ENCODE measurements at regions of chr13 and their contacts with region 1.

Region 1: DNA sequence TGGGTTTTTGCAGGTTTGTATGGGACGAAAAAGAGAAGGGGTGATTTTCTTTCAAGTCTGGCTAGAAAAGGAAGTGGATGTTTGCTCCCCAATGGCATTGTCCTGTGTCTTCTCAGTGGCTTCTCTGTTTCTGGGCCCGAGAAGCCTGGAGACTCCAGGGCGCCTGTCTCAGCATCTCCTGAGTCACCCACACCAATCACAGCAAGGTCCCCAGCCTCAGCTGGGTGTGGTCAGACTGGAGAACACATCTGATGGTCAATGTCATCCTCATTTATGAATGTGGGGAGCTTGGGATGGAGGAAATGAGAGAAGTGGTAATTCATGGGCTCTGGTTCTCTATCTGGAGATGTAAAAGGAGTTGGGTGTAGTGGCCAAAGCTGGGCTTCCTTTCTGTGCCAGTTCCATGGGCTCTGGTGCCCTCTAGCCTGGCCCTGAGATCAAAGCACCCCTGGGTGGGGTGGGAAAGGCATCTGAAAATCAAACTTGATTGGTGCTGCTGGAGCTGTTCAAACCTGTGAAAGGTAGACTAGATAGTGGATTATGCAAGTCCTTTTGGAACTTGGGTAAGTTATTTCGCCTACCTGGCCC is 13.4 kb downstream of the RASL11A start:
- DNase-seq: peak; percentile 59
- ATAC-seq: peak; percentile 83
- H3K4me3 ChIP-seq: no peak overlapping the region
- H3K27ac ChIP-seq: no peak overlapping the region
- H3K4me1 ChIP-seq: peaks cover 17% of the 10 kb centered on the region
- H3K27me3 ChIP-seq: no peaks in the 10 kb centered on the region
- CTCF ChIP-seq: peak; percentile 66

Region 2: GRCh38 chr13:26946684-26947343 is 337.2 kb before region 1 on chr13:
- CTCF ChIA-PET with region 1: interaction called, 8 read pairs
- POLR2A ChIA-PET with region 1: no interaction called
- intact Hi-C with region 1: loop called (anchors 2 kb)
- DNase-seq: peak; percentile 70
- ATAC-seq: peak; percentile 96
- H3K4me3 ChIP-seq: no peak overlapping the region
- H3K27ac ChIP-seq: no peak overlapping the region
- H3K4me1 ChIP-seq: peaks cover 4% of the 10 kb centered on the region; the same call in 1 of the 2 replicates
- H3K27me3 ChIP-seq: no peaks in the 10 kb centered on the region
- CTCF ChIP-seq: peak; percentile 81

Region 3: DNA sequence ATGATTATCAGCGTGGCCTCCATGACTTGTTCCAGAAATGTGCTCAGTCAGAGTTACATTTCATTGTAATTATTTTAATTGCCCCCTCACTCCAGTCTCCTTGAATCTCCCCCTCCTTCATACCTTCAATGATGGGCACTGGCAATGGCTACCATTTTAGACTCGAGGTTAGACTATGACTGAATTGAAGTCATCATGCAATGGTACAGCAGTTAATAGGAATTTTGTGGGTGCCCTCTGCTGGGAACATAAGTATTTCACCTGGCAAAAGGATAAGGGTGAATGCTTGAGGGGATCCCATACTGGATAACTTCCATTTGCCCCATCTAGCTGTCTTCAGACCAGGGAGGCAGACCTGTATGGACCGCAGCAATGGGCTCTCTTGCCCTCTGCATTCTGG is 80.1 kb before region 1 on chr13:
- CTCF ChIA-PET with region 1: no interaction called
- POLR2A ChIA-PET with region 1: no interaction called
- intact Hi-C with region 1: no loop called
- DNase-seq: peak; percentile 29
- ATAC-seq: peak; percentile 63
- H3K4me3 ChIP-seq: no peak overlapping the region
- H3K27ac ChIP-seq: no peak overlapping the region
- H3K4me1 ChIP-seq: peaks cover 22% of the 10 kb centered on the region
- H3K27me3 ChIP-seq: no peaks in the 10 kb centered on the region
- CTCF ChIP-seq: peak; percentile 47

Measured in PC-3 (cell line).